ENCODE measurements at regions of chr7 and their contacts with region 1.

Region 1: DNA sequence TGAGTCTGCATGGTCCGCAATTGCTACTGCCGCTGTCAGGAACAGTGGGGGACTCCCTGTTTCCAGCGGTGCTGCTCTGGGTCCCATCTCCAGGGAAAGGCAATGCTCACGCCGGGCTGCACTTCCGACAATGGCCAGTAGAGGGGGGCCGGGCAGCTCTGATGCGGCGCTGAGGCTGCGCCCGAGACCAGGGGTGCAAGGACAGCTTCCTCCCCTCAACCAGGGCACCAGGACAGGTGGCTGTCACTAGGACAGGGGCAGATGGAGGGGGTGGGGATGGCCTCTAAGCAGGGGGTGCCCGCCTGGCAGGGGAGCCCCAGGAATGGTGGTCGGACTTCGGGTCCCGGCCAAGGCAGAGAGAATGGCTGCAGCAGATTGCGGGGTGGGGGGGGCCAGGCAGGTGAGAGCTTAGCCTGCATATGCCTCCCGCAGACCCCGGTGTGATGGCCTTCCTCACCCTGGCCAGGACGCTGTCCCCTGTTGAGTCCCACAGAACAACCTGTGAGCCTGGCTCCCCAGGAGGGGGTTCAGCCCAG is 71.0 kb upstream of the KCTD7 start:
- DNase-seq: peak; percentile 54 to 84 (median 69)
- ATAC-seq: peak; percentile 48 to 85 (median 78)
- H3K4me3 ChIP-seq: peak overlapping the region in 1 of 12 donors; percentile 24
- H3K27ac ChIP-seq: no peak overlapping the region
- H3K4me1 ChIP-seq: peaks cover 0 to 8% (median 0%) of the 10 kb centered on the region in 12 donors
- H3K27me3 ChIP-seq: no peaks in the 10 kb centered on the region
- CTCF ChIP-seq: peak; percentile 88 to 97 (median 92)
- POLR2A ChIP-seq: no peak

Region 2: GRCh38 chr7:66493235-66494181 is 64.2 kb before region 1 on chr7:
- intact Hi-C with region 1: no loop called
- DNase-seq: peak; percentile 98 to 99 (median 98)
- ATAC-seq: peak; percentile 98 to 99 (median 98)
- H3K4me3 ChIP-seq: peak overlapping the region; percentile 33 to 93 (median 68)
- H3K27ac ChIP-seq: peak overlapping the region; percentile 81 to 97 (median 92)
- H3K4me1 ChIP-seq: peaks cover 0 to 21% (median 10%) of the 10 kb centered on the region in 12 donors
- H3K27me3 ChIP-seq: no peaks in the 10 kb centered on the region
- CTCF ChIP-seq: peak in 7 of 12 donors; percentile 13 to 40 (median 23)
- POLR2A ChIP-seq: peak; percentile 65 to 97

Region 3: GRCh38 chr7:66503551-66504031 is 54.1 kb before region 1 on chr7:
- intact Hi-C with region 1: no loop called
- DNase-seq: peak in 1 of 5 donors; percentile 28
- ATAC-seq: peak in 1 of 4 donors; percentile 23
- H3K4me3 ChIP-seq: no peak overlapping the region
- H3K27ac ChIP-seq: no peak overlapping the region
- H3K4me1 ChIP-seq: peaks cover 0 to 10% (median 0%) of the 10 kb centered on the region in 12 donors
- H3K27me3 ChIP-seq: peaks cover 0 to 28% (median 6%) of the 10 kb centered on the region in 9 donors
- CTCF ChIP-seq: no peak
- POLR2A ChIP-seq: no peak

Region 4: GRCh38 chr7:66952343-66953043 is 394.8 kb after region 1 on chr7:
- intact Hi-C with region 1: no loop called
- DNase-seq: no peak
- ATAC-seq: peak in 1 of 4 donors; percentile 27
- H3K4me3 ChIP-seq: no peak overlapping the region
- H3K27ac ChIP-seq: no peak overlapping the region
- H3K4me1 ChIP-seq: peaks cover 0 to 6% (median 0%) of the 10 kb centered on the region in 12 donors
- H3K27me3 ChIP-seq: no peaks in the 10 kb centered on the region
- CTCF ChIP-seq: no peak
- POLR2A ChIP-seq: no peak

Region 5: DNA sequence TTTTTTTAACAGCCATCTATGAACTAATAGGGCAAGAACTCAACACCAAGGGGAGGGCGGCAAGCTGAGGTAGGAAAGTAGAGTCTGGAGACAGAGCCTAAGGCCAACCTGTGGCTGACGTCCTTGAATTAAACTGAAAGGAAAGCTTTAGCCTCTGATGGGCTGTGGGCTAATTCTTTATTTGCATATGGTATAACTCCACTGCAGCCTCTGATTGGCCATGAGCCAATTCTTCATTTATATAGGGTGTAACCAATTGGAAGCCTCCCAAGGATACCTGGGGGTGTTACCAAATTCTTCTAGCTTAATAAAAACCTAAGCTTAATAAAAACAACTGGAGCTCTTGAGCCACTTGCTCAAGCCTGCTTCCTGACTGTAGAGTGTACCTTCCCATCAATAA is 449.3 kb after region 1 on chr7:
- intact Hi-C with region 1: loop called in 1 of 10 experiments (anchors 10 kb)
- DNase-seq: no peak
- ATAC-seq: no peak
- H3K4me3 ChIP-seq: no peak overlapping the region
- H3K27ac ChIP-seq: no peak overlapping the region
- H3K4me1 ChIP-seq: no peaks in the 10 kb centered on the region
- H3K27me3 ChIP-seq: no peaks in the 10 kb centered on the region
- CTCF ChIP-seq: no peak
- POLR2A ChIP-seq: no peak